ENCODE measurements at regions of chr5 and their contacts with region 1.

Region 1: DNA sequence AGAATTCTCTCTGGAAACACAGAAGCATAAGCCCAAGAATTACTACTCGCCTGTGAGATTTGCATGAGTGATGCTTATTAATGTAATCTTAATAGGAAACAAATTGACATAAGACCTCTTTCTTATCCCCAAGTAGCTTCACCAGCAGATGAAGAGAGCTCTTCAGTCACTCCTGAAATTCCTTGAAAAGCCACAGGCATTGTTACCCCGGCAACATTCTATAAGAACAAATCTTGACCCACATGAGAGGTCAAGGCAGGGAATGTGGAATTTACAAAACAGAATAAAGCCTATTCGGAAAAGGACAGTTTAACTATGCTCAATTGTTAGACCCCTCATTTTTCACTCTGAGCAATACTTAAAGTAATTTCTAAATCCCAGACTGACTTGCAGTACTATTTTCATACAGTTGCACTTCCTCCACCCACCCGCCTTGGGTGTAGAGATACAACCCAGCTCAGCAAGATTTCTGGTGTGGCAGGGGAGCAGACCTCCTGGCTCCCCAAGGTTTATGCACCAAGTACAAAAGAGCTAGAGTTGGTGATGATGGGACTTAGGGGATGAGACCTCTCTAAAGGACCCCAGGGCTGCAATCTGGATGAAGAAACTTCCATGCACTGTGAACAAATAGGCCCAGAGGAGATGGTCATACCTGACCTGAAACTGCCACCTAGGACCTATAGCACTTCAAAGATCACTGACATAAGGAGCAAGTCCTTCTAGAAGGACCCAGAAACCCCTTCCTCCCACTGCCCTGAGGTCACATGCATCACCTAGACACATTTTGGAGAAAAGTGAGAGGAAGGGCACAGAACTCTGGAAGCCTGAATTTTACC is 242.1 kb downstream of the ZNF608 start:
- DNase-seq: no peak
- ATAC-seq: no peak
- H3K4me3 ChIP-seq: no peak overlapping the region
- H3K27ac ChIP-seq: no peak overlapping the region
- H3K4me1 ChIP-seq: no peaks in the 10 kb centered on the region
- H3K27me3 ChIP-seq: no peaks in the 10 kb centered on the region
- CTCF ChIP-seq: no peak
- POLR2A ChIP-seq: no peak

Region 2: DNA sequence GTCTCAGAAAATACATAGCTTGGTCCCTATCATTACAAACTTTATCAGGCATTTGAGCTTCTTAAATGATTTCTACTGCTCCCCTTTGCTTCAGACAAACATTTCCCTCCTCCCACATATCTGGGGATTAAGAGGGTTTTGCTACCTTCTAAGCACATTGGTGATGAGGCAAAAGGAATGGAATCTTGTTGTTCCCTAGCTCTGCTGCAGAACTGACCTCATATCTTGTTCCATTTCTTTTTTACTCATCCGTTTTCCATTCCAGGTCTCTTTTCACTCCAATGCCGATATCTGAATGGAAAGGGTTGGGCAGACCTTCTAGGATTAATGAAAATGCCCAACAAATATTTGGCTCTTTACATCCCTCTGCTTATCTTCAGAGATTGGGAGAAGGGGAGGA is 202.4 kb before region 1 on chr5:
- intact Hi-C with region 1: no loop called
- DNase-seq: no peak
- ATAC-seq: no peak
- H3K4me3 ChIP-seq: no peak overlapping the region
- H3K27ac ChIP-seq: no peak overlapping the region
- H3K4me1 ChIP-seq: peaks cover 0 to 15% (median 0%) of the 10 kb centered on the region in 12 donors
- H3K27me3 ChIP-seq: no peaks in the 10 kb centered on the region
- CTCF ChIP-seq: no peak
- POLR2A ChIP-seq: no peak

Region 3: DNA sequence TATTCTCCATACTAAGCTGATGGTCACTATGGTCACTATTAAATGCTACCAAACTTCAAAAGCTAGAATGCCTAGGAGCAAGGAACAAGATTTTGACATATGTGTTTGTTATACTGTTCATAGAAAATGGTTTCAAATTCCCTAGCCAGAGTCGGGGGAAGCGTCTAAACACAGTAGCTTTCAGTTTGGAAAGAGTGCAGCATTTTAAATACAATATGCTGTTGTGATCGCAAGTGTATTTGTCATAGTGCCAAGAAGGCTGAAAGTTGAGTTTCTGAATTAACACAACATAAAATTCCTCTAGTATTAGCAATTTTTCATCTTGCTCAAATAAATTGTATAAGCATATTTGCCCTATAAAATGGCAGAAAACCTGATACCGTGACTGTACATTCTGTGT is 38.3 kb before region 1 on chr5:
- intact Hi-C with region 1: loop called in 1 of 10 experiments (anchors 2 kb)
- DNase-seq: no peak
- ATAC-seq: no peak
- H3K4me3 ChIP-seq: no peak overlapping the region
- H3K27ac ChIP-seq: no peak overlapping the region
- H3K4me1 ChIP-seq: peaks cover 0 to 25% (median 0%) of the 10 kb centered on the region in 12 donors
- H3K27me3 ChIP-seq: no peaks in the 10 kb centered on the region
- CTCF ChIP-seq: no peak
- POLR2A ChIP-seq: no peak

Region 4: GRCh38 chr5:124584991-124585715 is 80.9 kb after region 1 on chr5:
- intact Hi-C with region 1: no loop called
- DNase-seq: no peak
- ATAC-seq: no peak
- H3K4me3 ChIP-seq: no peak overlapping the region
- H3K27ac ChIP-seq: no peak overlapping the region
- H3K4me1 ChIP-seq: no peaks in the 10 kb centered on the region
- H3K27me3 ChIP-seq: no peaks in the 10 kb centered on the region
- CTCF ChIP-seq: no peak
- POLR2A ChIP-seq: no peak

Region 5: GRCh38 chr5:124599028-124599973 is 95.0 kb after region 1 on chr5:
- intact Hi-C with region 1: no loop called
- DNase-seq: peak in 3 of 5 donors; percentile 14 to 31 (median 20)
- ATAC-seq: peak; percentile 79 to 87 (median 84)
- H3K4me3 ChIP-seq: no peak overlapping the region
- H3K27ac ChIP-seq: peak overlapping the region in 5 of 12 donors; percentile 0 to 48 (median 43)
- H3K4me1 ChIP-seq: peaks cover under 1 to 37% (median 20%) of the 10 kb centered on the region in 12 donors
- H3K27me3 ChIP-seq: no peaks in the 10 kb centered on the region
- CTCF ChIP-seq: no peak
- POLR2A ChIP-seq: no peak